CD4-positive, alpha-beta memory T cell (primary cell): ENCODE measurements at regions of chr2 and their contacts with region 1.

Region 1: DNA sequence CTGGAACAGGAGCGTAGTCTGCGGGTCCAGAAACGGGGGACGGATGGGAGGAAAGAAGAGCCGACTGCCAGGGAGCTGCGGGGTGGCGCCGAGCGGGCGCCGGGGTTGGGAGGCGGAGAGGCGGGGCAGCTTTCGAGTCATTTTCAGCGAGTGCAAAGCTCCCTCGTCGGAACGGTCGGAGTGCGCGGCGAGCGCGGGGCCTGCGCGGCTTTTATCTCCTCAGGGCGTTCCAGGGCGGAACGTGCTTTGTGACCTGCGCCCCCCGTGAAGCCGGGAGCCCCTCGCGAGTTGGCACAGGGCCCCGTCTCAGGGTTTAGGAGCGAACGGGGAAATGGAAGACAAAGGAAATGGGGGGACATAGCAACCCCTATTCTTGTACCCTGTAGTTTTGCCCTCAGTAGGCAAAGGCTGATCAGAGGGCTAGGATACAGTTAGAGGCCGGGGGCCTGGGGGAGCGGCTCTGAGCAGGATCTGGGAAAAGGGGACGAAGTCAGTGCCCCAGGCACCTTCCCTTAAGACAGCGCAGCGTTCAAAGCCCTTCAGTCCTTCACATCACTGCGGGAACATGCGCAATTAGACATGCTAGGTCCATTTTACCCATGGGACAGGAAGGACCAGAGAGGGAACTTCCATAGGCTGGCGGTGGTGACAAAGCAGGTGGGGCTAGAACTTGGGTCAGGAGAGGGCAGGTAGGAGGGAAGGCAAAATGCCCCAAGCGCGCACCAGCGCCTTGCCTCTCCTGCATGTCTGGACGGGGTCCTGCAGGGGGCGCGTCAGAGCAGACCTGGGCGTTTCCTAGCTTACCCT is 60.1 kb upstream of the IL1RL1 start:
- DNase-seq: peak; percentile 50 to 58 (median 54)
- H3K4me3 ChIP-seq: peak overlapping the region; percentile 80 to 86
- H3K4me3 Mint-ChIP-seq: peak overlapping the region; percentile 90 to 99 (median 95)
- H3K27ac ChIP-seq: no peak overlapping the region
- H3K27ac Mint-ChIP-seq: peak overlapping the region; percentile 18 to 94 (median 78)
- H3K4me1 ChIP-seq: peaks cover 12% of the 10 kb centered on the region
- H3K4me1 Mint-ChIP-seq: peaks cover 14 to 39% (median 23%) of the 10 kb centered on the region in 4 donors
- H3K27me3 ChIP-seq: no peaks in the 10 kb centered on the region
- H3K27me3 Mint-ChIP-seq: peaks cover 0 to 2% of the 10 kb centered on the region in 2 donors

Region 2: DNA sequence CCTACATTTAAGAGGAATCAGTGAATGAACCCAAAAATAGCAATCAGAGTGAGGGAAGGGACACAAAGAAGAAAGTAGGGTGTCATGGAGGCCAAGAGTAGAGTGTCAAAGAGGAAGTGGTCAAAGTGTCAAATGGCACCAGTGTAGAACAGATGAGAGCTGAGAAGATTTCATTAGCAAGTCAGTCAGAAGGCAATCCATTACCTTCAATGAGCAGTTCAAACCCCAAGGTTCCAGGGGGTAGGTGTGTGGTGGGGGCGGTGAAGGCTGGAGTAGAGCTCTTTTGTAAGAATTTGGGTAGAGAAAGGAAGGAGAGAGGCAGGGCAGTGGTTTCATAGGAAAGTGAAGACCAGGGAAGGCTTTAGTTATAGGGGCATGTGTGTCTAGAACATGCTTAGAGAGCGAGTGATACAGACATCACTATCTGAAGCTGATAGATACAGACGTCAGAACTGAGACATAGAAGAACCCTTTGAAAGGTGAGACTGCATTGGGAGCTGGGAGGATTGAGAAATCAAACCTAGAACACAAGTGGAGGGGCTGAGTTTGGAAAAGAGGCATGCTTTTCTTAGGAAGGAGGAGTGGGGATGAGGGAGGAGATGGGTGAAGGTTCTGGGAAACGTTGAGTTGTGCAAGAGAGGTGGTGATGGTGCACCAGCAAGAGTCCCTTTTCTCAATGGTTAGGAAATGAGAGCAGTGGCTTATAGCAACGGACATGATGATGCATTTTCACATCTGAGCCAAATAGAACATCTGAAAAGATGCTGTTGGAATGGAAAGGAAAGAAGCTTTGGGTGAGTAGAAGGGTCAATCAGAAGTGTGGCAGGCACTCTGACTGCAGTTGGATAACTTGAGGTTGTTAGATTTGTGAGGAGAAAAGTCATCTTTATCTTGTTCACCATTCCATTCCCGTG is 11.2 kb after region 1 on chr2:
- CTCF ChIA-PET with region 1: interaction called, 27 read pairs
- POLR2A ChIA-PET with region 1: no interaction called
- intact Hi-C with region 1: no loop called
- DNase-seq: no peak
- H3K4me3 ChIP-seq: no peak overlapping the region
- H3K4me3 Mint-ChIP-seq: no peak overlapping the region
- H3K27ac ChIP-seq: no peak overlapping the region
- H3K27ac Mint-ChIP-seq: no peak overlapping the region
- H3K4me1 ChIP-seq: peaks cover 29% of the 10 kb centered on the region
- H3K4me1 Mint-ChIP-seq: peaks cover 14 to 27% (median 16%) of the 10 kb centered on the region in 4 donors
- H3K27me3 ChIP-seq: no peaks in the 10 kb centered on the region
- H3K27me3 Mint-ChIP-seq: peaks cover 0 to 1% of the 10 kb centered on the region in 2 donors